Testis (tissue), 5 donors: ENCODE measurements at regions of chr13 and their contacts with region 1.

Region 1: DNA sequence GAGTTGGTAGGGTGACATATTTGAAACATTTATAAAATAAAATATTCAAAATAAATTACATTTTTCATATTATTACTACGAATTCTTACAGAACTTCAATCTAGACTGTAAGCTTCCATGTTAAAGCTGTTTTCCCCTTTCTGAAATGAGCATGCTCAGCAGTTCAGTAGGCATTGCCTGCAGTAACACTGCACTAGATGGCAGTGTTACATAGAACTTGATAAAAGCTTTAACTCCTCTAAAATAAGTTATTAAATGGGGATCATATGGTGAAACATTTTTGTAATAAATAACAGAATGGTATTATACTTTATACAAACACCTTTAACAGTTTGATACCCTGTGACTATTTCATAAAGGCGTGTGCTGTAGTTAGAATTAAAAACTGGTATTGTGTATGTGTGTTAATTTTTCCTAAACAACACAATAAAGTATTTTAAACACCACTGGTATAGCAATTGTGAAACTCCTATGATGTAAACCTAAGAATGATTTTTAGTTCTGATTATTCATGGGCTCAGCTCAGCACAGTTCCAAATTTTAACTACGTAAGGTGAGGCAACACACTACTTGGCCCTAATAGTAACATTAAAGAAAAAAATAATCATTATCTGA is 11.6 kb upstream of the GPR18 start:
- DNase-seq: no peak
- H3K4me3 ChIP-seq: no peak overlapping the region
- H3K27ac ChIP-seq: peak overlapping the region in 1 of 2 donors; percentile 41
- H3K4me1 ChIP-seq: peaks cover 15% of the 10 kb centered on the region
- H3K27me3 ChIP-seq: no peaks in the 10 kb centered on the region
- CTCF ChIP-seq: peak; percentile 62 to 84 (median 68)
- POLR2A ChIP-seq: no peak

Region 2: DNA sequence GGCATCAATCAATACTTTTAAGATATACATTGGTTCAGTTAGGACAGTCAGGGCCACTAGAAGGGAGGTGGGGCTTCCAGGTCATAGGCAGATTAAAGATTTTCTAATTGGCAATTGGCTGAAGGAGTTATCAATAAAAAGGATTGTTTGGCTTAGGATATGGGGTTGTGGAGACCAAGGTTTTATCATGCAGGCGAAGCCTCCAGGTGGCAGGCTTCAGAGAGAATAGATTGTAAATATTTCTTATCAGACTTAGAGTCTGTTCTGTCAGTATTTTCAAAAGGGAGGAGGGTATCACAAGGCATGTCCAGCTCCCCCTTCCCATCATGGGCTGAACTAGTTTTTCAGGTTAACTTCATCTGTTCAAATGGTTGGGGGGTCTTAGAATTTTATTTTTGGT is 1204.3 kb before region 1 on chr13:
- intact Hi-C with region 1: no loop called
- DNase-seq: no peak
- H3K4me3 ChIP-seq: no peak overlapping the region
- H3K27ac ChIP-seq: no peak overlapping the region
- H3K4me1 ChIP-seq: no peaks in the 10 kb centered on the region
- H3K27me3 ChIP-seq: no peaks in the 10 kb centered on the region
- CTCF ChIP-seq: no peak
- POLR2A ChIP-seq: no peak

Region 3: GRCh38 chr13:98821372-98822224 is 448.1 kb before region 1 on chr13:
- intact Hi-C with region 1: no loop called
- DNase-seq: no peak
- H3K4me3 ChIP-seq: no peak overlapping the region
- H3K27ac ChIP-seq: peak overlapping the region in 1 of 2 donors; percentile 45
- H3K4me1 ChIP-seq: peaks cover 27% of the 10 kb centered on the region
- H3K27me3 ChIP-seq: no peaks in the 10 kb centered on the region
- CTCF ChIP-seq: no peak
- POLR2A ChIP-seq: no peak

Region 4: GRCh38 chr13:99153219-99153618 is 116.5 kb before region 1 on chr13:
- intact Hi-C with region 1: no loop called
- DNase-seq: no peak
- H3K4me3 ChIP-seq: no peak overlapping the region
- H3K27ac ChIP-seq: no peak overlapping the region
- H3K4me1 ChIP-seq: no peaks in the 10 kb centered on the region
- H3K27me3 ChIP-seq: no peaks in the 10 kb centered on the region
- CTCF ChIP-seq: no peak
- POLR2A ChIP-seq: no peak

Region 5: DNA sequence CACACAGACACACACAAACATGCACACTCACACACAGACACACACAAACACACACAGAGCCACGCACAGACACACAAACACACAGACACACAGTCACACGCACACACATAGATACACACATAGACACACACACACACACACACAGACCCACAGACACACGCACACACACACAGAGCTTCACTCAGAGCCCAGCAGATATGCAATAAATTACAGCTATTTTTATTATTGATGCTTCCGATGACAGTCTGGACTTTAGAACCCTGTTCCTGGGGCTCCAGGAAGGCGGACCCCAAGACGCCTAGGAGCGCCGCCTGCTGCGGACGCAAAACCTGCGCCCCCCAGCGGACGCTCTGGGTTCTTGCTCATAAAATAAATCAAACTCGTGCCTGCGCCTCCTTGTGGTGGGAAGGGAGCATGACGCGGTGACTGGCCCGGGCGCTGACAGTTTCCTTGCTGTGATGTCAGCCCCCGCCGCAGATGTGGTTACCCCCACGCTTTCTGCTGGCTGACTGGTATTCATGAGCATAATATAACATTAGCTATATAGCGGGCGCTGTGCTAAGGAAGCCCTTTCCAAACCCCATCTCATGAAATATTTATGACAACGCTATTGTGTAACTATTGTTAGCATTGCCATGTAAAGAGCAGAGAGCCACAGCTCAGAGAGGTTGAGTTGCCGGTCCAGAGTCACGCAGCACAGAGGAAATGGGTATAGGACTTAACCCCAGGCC is 167.1 kb after region 1 on chr13:
- intact Hi-C with region 1: loop called (anchors 5 kb)
- DNase-seq: peak; percentile 94
- H3K4me3 ChIP-seq: no peak overlapping the region
- H3K27ac ChIP-seq: no peak overlapping the region
- H3K4me1 ChIP-seq: peaks cover 6% of the 10 kb centered on the region
- H3K27me3 ChIP-seq: no peaks in the 10 kb centered on the region
- CTCF ChIP-seq: peak; percentile 99 to 100 (median 99)
- POLR2A ChIP-seq: no peak

Region 6: GRCh38 chr13:99528547-99528946 is 258.8 kb after region 1 on chr13:
- intact Hi-C with region 1: no loop called
- DNase-seq: no peak
- H3K4me3 ChIP-seq: no peak overlapping the region
- H3K27ac ChIP-seq: no peak overlapping the region
- H3K4me1 ChIP-seq: peaks cover 4% of the 10 kb centered on the region
- H3K27me3 ChIP-seq: no peaks in the 10 kb centered on the region
- CTCF ChIP-seq: no peak
- POLR2A ChIP-seq: no peak